Stomach (tissue), 19 donors: ENCODE measurements at regions of chr1 and their contacts with region 1.

Region 1: DNA sequence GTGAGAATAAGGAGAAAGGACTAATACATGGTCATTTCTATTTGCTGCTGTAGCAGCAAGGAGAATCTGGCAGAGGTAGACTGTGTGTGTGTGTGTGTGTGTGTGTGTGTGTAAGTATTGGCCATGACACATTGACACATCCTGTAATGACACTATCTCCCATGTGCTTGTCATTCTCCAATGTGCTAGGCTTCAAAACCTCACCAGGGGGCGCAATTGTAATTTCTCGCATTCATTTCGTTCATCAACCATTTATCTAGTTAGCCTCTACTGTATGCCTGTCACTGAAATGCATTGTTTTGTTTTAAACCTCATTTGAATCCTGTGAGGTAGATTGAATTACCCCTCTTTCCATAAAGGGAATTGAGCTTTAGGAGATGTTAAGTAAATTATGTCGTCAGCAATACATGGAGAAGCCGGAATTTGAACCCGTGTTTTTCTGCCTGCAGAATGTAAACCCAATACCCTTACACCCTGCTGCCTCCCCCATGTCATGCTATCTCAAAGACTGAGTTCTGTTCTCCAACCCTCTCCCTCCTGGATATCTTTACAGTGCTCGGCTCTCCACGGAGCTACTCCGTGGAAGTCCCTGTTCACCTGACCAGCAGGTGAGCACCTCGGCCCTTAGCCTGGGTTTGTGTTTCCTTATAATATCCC is 100.8 kb downstream of the UCK2 start:
- DNase-seq: peak; percentile 37 to 72
- H3K4me3 ChIP-seq: no peak overlapping the region
- H3K27ac ChIP-seq: no peak overlapping the region
- H3K4me1 ChIP-seq: peaks cover 0 to 4% (median 0%) of the 10 kb centered on the region in 4 donors
- H3K27me3 ChIP-seq: no peaks in the 10 kb centered on the region
- CTCF ChIP-seq: peak in 5 of 7 experiments; percentile 27 to 68 (median 57)
- EP300 ChIP-seq: no peak
- POLR2A ChIP-seq: no peak

Region 2: GRCh38 chr1:166166695-166167571 is 238.7 kb after region 1 on chr1 and contains the start of gene FAM78B:
- intact Hi-C with region 1: loop called (anchors 10 kb)
- DNase-seq: peak; percentile 80 to 90
- H3K4me3 ChIP-seq: peak within 1 kb of the TSS; percentile 67 to 95 (median 77)
- H3K27ac ChIP-seq: peak within 1 kb of the TSS; percentile 39 to 81 (median 58)
- H3K4me1 ChIP-seq: peaks cover 14 to 29% (median 25%) of the 10 kb centered on the region in 4 donors
- H3K27me3 ChIP-seq: peaks cover 0 to 35% (median 0%) of the 10 kb centered on the region in 3 donors
- CTCF ChIP-seq: no peak
- EP300 ChIP-seq: no peak
- POLR2A ChIP-seq: no peak
- total RNA-seq, gene FAM78B: 1.0 to 8.0 (median 1.1) TPM in 3 of 5 donors, not detected in the others

Region 3: DNA sequence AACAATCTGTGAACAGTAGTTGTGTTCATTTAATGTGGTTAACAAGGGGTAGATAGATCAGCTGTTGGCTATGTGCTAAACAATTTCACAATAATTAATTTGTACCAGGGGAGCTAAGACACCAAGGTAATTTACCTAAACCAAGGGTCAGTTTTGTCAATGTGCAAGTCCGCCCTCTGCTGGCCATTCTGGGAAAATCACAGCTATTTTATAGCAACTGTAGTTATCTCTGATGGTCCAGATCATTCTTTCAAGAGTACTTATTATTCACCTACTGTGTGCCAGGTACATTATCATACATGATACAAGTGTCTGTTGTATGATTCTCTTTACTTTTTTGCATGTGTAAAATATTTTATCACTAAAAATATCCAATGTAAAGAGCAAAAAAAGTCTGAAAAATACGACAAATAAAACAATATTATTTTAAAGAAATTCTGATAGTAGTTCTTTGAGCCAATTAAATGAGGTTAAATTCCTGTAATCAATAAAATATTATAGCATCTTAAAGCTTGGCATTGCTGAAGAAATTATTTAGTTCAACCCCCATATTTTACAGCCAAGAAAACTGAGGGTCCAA is 550.9 kb after region 1 on chr1:
- intact Hi-C with region 1: loop called (anchors 10 kb)
- DNase-seq: peak; percentile 62 to 66
- H3K4me3 ChIP-seq: no peak overlapping the region
- H3K27ac ChIP-seq: no peak overlapping the region
- H3K4me1 ChIP-seq: no peaks in the 10 kb centered on the region
- H3K27me3 ChIP-seq: no peaks in the 10 kb centered on the region
- CTCF ChIP-seq: peak in 5 of 7 experiments; percentile 31 to 80 (median 58)
- EP300 ChIP-seq: no peak
- POLR2A ChIP-seq: no peak